BJ (cell line): ENCODE measurements at regions of chr18 and their contacts with region 1.

Region 1: DNA sequence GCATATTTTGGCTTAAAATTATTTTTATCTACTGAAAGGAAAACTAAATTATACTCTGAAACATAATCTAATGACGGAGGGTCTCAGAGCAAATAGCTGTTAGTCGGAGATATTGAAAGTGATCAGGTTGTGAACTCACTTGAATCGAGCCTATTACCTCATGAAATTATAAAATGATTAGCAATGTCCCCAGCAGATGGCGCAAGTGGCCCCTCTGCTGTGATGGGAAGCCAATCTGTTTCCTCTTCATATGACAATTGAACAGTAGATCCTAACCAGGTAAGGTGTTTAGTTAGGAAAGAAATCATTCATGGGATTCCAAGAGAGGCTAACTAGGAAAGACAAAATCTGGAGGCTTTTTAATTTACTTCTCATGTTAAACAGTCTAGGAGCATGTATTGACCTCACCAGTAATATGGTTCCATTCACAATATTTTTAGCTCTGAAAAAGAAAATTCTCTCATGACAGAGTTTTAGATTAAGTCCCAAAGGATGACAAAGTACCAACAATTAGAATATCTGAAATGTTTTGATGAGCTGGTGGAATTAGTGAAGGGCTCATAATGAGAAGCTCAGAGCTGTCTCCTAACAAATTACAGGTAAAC is 29.9 kb upstream of the MPPE1 start:
- DNase-seq: no peak
- H3K4me3 ChIP-seq: no peak overlapping the region
- H3K27me3 ChIP-seq: no peaks in the 10 kb centered on the region
- CTCF ChIP-seq: peak; percentile 77

Region 2: DNA sequence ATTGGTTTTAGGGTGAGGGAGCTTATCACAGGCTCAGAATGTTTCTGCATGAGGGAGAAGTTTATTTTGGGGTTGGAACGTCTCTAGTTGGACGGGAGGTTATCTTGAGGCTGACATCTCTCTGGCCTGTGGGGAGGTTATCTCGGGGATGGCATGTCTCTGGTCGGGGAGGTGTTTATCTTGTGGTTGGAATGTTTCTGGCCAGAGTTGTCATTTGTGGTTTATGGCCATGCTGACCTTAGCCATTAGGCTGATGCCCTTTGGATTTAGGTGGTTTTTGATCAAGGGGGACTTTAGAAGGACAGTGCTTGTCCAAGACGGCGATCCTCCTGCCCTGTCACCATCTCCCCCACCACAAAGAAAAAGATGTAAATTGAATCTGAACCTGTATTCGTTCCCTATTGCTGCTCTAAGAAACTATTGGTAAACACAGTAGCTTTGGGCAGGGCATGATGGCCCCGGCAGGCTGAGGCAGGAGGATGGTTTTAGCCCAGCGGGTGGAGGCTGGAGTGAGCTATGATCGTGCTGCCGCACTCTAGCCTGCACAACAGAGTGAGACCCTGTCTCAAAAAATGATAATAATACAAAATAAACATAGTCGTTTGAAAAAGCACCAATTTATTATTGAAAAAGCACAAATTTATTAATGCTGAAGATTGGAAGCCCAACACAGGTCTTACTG is 12.0 kb before region 1 on chr18:
- CTCF ChIA-PET with region 1: interaction called, 35 read pairs
- POLR2A ChIA-PET with region 1: no interaction called
- DNase-seq: no peak
- H3K4me3 ChIP-seq: no peak overlapping the region
- H3K27me3 ChIP-seq: peaks cover 2% of the 10 kb centered on the region; the same call in 1 of the 2 replicates
- CTCF ChIP-seq: no peak

Region 3: GRCh38 chr18:11955239-11956029 is 17.5 kb after region 1 on chr18:
- CTCF ChIA-PET with region 1: interaction called, 19 read pairs
- POLR2A ChIA-PET with region 1: no interaction called
- DNase-seq: peak; percentile 71
- H3K4me3 ChIP-seq: no peak overlapping the region
- H3K27me3 ChIP-seq: no peaks in the 10 kb centered on the region
- CTCF ChIP-seq: no peak

Region 4: GRCh38 chr18:11980555-11981382 is 42.8 kb after region 1 on chr18:
- CTCF ChIA-PET with region 1: interaction called, 21 read pairs
- POLR2A ChIA-PET with region 1: no interaction called
- DNase-seq: peak; percentile 92
- H3K4me3 ChIP-seq: peak overlapping the region; percentile 82
- H3K27me3 ChIP-seq: no peaks in the 10 kb centered on the region
- CTCF ChIP-seq: peak; percentile 36; the same call in 1 of the 2 replicates

Region 5: DNA sequence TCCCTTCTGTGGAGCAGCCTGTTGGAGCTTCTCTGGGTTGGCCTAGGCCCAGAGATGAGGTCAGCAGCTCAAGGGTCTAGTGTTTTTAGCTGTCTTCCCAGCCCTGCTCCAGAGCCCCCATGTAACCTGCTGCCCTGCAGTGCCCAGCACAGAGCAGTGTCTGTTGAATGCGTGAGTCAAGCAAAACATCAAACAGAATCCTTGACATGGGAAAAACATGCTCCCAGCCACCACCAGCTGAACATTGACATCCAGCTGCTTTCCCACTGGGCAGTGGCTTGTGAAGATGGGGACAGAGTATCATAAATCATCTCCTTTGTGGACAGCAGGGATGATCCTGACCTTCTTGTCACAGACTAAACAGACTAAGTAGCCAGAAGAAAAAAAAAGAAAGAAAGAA is 65.9 kb after region 1 on chr18:
- CTCF ChIA-PET with region 1: interaction called, 372 read pairs
- POLR2A ChIA-PET with region 1: no interaction called
- DNase-seq: no peak
- H3K4me3 ChIP-seq: no peak overlapping the region
- H3K27me3 ChIP-seq: no peaks in the 10 kb centered on the region
- CTCF ChIP-seq: no peak

Region 6: DNA sequence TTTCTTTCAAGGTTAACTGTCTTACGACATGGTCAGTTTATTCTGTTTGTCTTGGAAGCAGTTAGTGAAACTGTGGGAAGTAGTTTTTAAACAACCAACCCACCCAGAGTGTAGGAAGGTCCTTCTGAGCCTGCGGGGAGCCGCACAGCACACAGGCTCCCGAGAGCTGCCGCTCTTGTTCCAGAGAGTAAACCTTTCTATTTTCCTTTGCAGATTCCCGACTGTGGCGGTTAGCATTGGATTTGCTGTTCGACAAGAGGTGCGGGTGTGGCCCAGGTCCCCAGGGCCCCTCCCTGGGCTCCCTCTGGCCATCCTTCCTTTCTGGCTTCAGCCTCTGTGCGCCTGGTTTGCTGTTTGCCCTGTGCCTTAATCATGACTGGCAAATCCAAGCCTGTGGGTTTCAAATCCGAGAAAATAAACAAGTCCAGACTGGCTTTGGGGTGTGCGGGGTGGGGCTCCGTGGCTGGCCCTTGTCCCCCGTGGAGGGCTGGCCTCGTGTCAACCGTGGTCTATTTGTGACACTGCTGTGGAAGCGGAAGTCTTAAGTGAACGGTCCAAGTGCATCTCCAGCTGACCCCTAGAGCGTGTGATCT is 74.1 kb after region 1 on chr18:
- CTCF ChIA-PET with region 1: interaction called, 10 read pairs
- POLR2A ChIA-PET with region 1: no interaction called
- DNase-seq: no peak
- H3K4me3 ChIP-seq: no peak overlapping the region
- H3K27me3 ChIP-seq: no peaks in the 10 kb centered on the region
- CTCF ChIP-seq: no peak

Region 7: GRCh38 chr18:12038639-12039417 is 100.9 kb after region 1 on chr18:
- CTCF ChIA-PET with region 1: interaction called, 34 read pairs
- POLR2A ChIA-PET with region 1: no interaction called
- DNase-seq: no peak
- H3K4me3 ChIP-seq: peak overlapping the region; percentile 52
- H3K27me3 ChIP-seq: no peaks in the 10 kb centered on the region; the same call in 1 of the 2 replicates
- CTCF ChIP-seq: peak; percentile 92

Region 8: GRCh38 chr18:12361770-12362378 is 423.9 kb after region 1 on chr18:
- CTCF ChIA-PET with region 1: no interaction called
- POLR2A ChIA-PET with region 1: no interaction called
- DNase-seq: no peak
- H3K4me3 ChIP-seq: no peak overlapping the region
- H3K27me3 ChIP-seq: no peaks in the 10 kb centered on the region
- CTCF ChIP-seq: no peak